Endothelial cell of umbilical vein (primary cell): ENCODE measurements at regions of chr10 and their contacts with region 1.

Region 1: GRCh38 chr10:88281592-88282347 is 301.3 kb downstream of the RNLS start:
- DNase-seq: peak; percentile 19
- H3K4me3 ChIP-seq: no peak overlapping the region
- H3K27ac ChIP-seq: no peak overlapping the region
- H3K4me1 ChIP-seq: peaks cover 7% of the 10 kb centered on the region
- H3K27me3 ChIP-seq: no peaks in the 10 kb centered on the region
- CTCF ChIP-seq: no peak
- POLR2A ChIP-seq: no peak

Region 2: DNA sequence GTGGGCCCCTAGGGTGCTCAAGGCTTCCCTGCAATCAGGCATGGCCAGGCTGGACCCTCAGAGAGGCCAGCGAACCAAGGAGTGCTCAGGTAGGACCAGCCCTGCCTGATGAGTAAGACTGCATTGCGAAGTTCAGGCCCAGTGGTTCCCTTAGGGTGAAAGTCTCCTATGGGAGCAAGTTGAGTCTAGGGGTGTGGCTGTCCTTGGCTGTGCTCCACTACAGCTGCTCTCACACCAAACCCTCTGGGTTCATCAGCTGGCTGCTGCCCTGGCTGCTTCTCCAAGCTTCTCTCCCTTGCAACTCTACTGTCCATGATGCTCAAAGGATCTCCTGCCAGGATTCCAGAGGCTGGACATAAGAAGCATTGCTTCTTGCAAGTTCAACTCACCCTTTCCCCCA is 1243.0 kb before region 1 on chr10:
- CTCF ChIA-PET with region 1: no interaction called
- POLR2A ChIA-PET with region 1: no interaction called
- dilution Hi-C with region 1: no loop called
- intact Hi-C with region 1: no loop called
- DNase-seq: no peak
- H3K4me3 ChIP-seq: no peak overlapping the region
- H3K27ac ChIP-seq: no peak overlapping the region
- H3K4me1 ChIP-seq: no peaks in the 10 kb centered on the region
- H3K27me3 ChIP-seq: peaks cover 0 to 10% of the 10 kb centered on the region in 2 experiments
- CTCF ChIP-seq: no peak
- POLR2A ChIP-seq: no peak

Region 3: GRCh38 chr10:88293073-88293472 is 11.3 kb after region 1 on chr10:
- CTCF ChIA-PET with region 1: interaction called, 10 read pairs
- POLR2A ChIA-PET with region 1: no interaction called
- dilution Hi-C with region 1: no loop called
- intact Hi-C with region 1: no loop called
- DNase-seq: peak; percentile 52
- H3K4me3 ChIP-seq: no peak overlapping the region
- H3K27ac ChIP-seq: no peak overlapping the region
- H3K4me1 ChIP-seq: peaks cover 4% of the 10 kb centered on the region
- H3K27me3 ChIP-seq: no peaks in the 10 kb centered on the region
- CTCF ChIP-seq: no peak
- POLR2A ChIP-seq: no peak

Region 4: GRCh38 chr10:88456730-88457129 is 175.0 kb after region 1 on chr10:
- CTCF ChIA-PET with region 1: no interaction called
- POLR2A ChIA-PET with region 1: no interaction called
- dilution Hi-C with region 1: no loop called
- intact Hi-C with region 1: no loop called
- DNase-seq: no peak
- H3K4me3 ChIP-seq: no peak overlapping the region
- H3K27ac ChIP-seq: no peak overlapping the region
- H3K4me1 ChIP-seq: no peaks in the 10 kb centered on the region
- H3K27me3 ChIP-seq: peaks cover 2 to 3% of the 10 kb centered on the region in 2 experiments
- CTCF ChIP-seq: no peak
- POLR2A ChIP-seq: no peak